ENCODE measurements at regions of chr9 and their contacts with region 1.

Region 1: GRCh38 chr9:137223078-137223970 is 1.3 kb upstream of the RNF208 start:
- DNase-seq: peak; percentile 88
- ATAC-seq: peak; percentile 72
- H3K4me3 ChIP-seq: peak overlapping the region; percentile 67 to 72
- H3K27ac ChIP-seq: peak overlapping the region; percentile 82
- H3K4me1 ChIP-seq: peaks cover 25% of the 10 kb centered on the region
- H3K27me3 ChIP-seq: no peaks in the 10 kb centered on the region
- CTCF ChIP-seq: no peak

Region 2: GRCh38 chr9:137114610-137115391 is 108.5 kb before region 1 on chr9 and contains the start of gene DPP7:
- CTCF ChIA-PET with region 1: interaction called, 4 read pairs
- POLR2A ChIA-PET with region 1: no interaction called
- in situ Hi-C with region 1: no loop called
- intact Hi-C with region 1: loop called (anchors 5 kb)
- DNase-seq: no peak
- ATAC-seq: peak; percentile 89
- H3K4me3 ChIP-seq: peak within 1 kb of the TSS; percentile 45 to 56
- H3K27ac ChIP-seq: peak within 1 kb of the TSS; percentile 61; the same call in 1 of the 2 replicates
- H3K4me1 ChIP-seq: no peaks in the 10 kb centered on the region
- H3K27me3 ChIP-seq: no peaks in the 10 kb centered on the region
- CTCF ChIP-seq: no peak
- total RNA-seq, gene DPP7: 236 TPM

Region 3: GRCh38 chr9:137200311-137201204 is 22.8 kb before region 1 on chr9 and contains the start of gene TPRN:
- CTCF ChIA-PET with region 1: interaction called, 12 read pairs
- POLR2A ChIA-PET with region 1: no interaction called
- in situ Hi-C with region 1: no loop called
- intact Hi-C with region 1: no loop called
- DNase-seq: peak; percentile 78
- ATAC-seq: peak; percentile 92
- H3K4me3 ChIP-seq: peak within 1 kb of the TSS; percentile 60 to 63
- H3K27ac ChIP-seq: peak within 1 kb of the TSS; percentile 65
- H3K4me1 ChIP-seq: peaks cover 32% of the 10 kb centered on the region
- H3K27me3 ChIP-seq: no peaks in the 10 kb centered on the region
- CTCF ChIP-seq: no peak
- total RNA-seq, gene TPRN: 21.7 TPM

Region 4: GRCh38 chr9:137236238-137236935 is 13.1 kb after region 1 on chr9:
- CTCF ChIA-PET with region 1: interaction called, 10 read pairs
- POLR2A ChIA-PET with region 1: interaction called, 5 read pairs
- in situ Hi-C with region 1: no loop called
- intact Hi-C with region 1: no loop called
- DNase-seq: no peak
- ATAC-seq: peak; percentile 57
- H3K4me3 ChIP-seq: no peak overlapping the region
- H3K27ac ChIP-seq: peak overlapping the region; percentile 61
- H3K4me1 ChIP-seq: peaks cover 26% of the 10 kb centered on the region
- H3K27me3 ChIP-seq: no peaks in the 10 kb centered on the region
- CTCF ChIP-seq: peak; percentile 98

Region 5: GRCh38 chr9:137254624-137255447 is 31.5 kb after region 1 on chr9 and contains the start of gene NELFB:
- CTCF ChIA-PET with region 1: no interaction called
- POLR2A ChIA-PET with region 1: no interaction called
- in situ Hi-C with region 1: no loop called
- intact Hi-C with region 1: no loop called
- DNase-seq: no peak
- ATAC-seq: peak; percentile 91
- H3K4me3 ChIP-seq: peak within 1 kb of the TSS; percentile 72 to 78
- H3K27ac ChIP-seq: peak within 1 kb of the TSS; percentile 82
- H3K4me1 ChIP-seq: peaks cover 16% of the 10 kb centered on the region
- H3K27me3 ChIP-seq: no peaks in the 10 kb centered on the region
- CTCF ChIP-seq: no peak
- total RNA-seq, gene NELFB: 62.4 TPM